Stomach (tissue), 19 donors: ENCODE measurements at regions of chr3 and their contacts with region 1.

Region 1: GRCh38 chr3:149657926-149658733 is at the start of gene WWTR1:
- DNase-seq: peak; percentile 88 to 96
- H3K4me3 ChIP-seq: peak within 1 kb of the TSS; percentile 63 to 78 (median 73)
- H3K27ac ChIP-seq: peak within 1 kb of the TSS; percentile 86 to 99 (median 96)
- H3K4me1 ChIP-seq: peaks cover 24 to 62% (median 38%) of the 10 kb centered on the region in 4 donors
- H3K27me3 ChIP-seq: peaks cover 0 to 27% (median 0%) of the 10 kb centered on the region in 3 donors
- CTCF ChIP-seq: no peak
- EP300 ChIP-seq: peak; percentile 41
- POLR2A ChIP-seq: peak in 2 of 4 donors; percentile 76 to 89
- total RNA-seq, gene WWTR1: 15.4 to 116 (median 89.4) TPM

Region 2: DNA sequence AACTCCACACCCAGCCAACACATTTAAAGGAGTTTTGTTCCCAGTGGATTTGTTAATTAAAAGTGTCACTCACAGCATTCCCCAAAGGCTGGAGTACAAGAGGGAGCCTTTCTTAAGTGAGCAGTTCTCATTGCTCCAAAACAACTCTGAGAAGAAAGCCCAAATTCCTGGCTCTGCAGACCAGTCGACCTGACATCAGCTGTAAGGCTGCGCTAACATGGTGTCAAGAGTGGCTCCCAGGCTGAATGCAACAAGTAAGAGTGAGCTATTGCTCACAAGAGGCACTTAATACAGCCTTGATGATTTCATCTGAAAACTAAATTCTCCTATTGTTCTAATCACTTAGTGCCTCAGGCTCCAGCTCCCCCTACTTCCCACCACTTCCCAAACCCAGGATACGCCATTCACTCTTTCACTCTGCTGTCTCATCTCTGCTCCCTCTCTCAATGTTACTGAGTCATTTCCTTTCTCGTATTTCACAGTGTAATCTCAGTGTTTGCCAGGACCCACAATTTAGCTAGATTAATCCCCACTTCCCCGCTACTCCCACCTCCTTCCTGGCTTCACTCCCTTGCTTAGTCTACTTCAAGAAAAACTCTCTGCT is 82.1 kb before region 1 on chr3:
- intact Hi-C with region 1: loop called (anchors 10 kb)
- DNase-seq: peak in 1 of 2 donors; percentile 85
- H3K4me3 ChIP-seq: no peak overlapping the region
- H3K27ac ChIP-seq: peak overlapping the region; percentile 69 to 86 (median 81)
- H3K4me1 ChIP-seq: peaks cover 45 to 93% (median 75%) of the 10 kb centered on the region in 4 donors
- H3K27me3 ChIP-seq: no peaks in the 10 kb centered on the region
- CTCF ChIP-seq: no peak
- EP300 ChIP-seq: no peak
- POLR2A ChIP-seq: no peak

Region 3: GRCh38 chr3:149717391-149718056 is 59.4 kb after region 1 on chr3:
- intact Hi-C with region 1: loop called (anchors 10 kb)
- DNase-seq: peak; percentile 45 to 86
- H3K4me3 ChIP-seq: peak overlapping the region; percentile 5 to 36 (median 16)
- H3K27ac ChIP-seq: no peak overlapping the region
- H3K4me1 ChIP-seq: peaks cover 0 to 9% (median 4%) of the 10 kb centered on the region in 4 donors
- H3K27me3 ChIP-seq: no peaks in the 10 kb centered on the region
- CTCF ChIP-seq: peak in 5 of 7 experiments; percentile 56 to 92 (median 75)
- EP300 ChIP-seq: no peak
- POLR2A ChIP-seq: no peak

Region 4: DNA sequence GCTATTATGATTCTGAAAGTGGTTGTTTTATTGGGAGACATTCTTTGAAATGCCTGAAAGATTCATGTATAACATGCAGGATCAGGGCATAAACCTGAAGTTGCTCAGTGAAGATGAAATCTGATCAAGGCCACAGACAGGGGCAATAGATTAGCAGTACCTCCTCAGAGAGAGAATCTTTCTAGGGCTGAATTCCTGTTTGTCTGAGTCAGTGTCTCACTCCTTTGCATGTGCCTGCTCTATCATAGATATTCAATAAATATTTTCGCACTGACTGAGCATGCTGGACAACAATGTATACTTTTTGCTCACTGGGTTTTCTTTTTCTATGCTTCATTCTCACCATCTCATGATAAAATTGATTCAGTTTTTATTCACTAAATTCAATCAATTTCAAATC is 362.4 kb after region 1 on chr3:
- intact Hi-C with region 1: no loop called
- DNase-seq: no peak
- H3K4me3 ChIP-seq: no peak overlapping the region
- H3K27ac ChIP-seq: no peak overlapping the region
- H3K4me1 ChIP-seq: no peaks in the 10 kb centered on the region
- H3K27me3 ChIP-seq: no peaks in the 10 kb centered on the region
- CTCF ChIP-seq: no peak
- EP300 ChIP-seq: no peak
- POLR2A ChIP-seq: no peak